BJ (cell line): ENCODE measurements at regions of chr19 and their contacts with region 1.

Region 1: DNA sequence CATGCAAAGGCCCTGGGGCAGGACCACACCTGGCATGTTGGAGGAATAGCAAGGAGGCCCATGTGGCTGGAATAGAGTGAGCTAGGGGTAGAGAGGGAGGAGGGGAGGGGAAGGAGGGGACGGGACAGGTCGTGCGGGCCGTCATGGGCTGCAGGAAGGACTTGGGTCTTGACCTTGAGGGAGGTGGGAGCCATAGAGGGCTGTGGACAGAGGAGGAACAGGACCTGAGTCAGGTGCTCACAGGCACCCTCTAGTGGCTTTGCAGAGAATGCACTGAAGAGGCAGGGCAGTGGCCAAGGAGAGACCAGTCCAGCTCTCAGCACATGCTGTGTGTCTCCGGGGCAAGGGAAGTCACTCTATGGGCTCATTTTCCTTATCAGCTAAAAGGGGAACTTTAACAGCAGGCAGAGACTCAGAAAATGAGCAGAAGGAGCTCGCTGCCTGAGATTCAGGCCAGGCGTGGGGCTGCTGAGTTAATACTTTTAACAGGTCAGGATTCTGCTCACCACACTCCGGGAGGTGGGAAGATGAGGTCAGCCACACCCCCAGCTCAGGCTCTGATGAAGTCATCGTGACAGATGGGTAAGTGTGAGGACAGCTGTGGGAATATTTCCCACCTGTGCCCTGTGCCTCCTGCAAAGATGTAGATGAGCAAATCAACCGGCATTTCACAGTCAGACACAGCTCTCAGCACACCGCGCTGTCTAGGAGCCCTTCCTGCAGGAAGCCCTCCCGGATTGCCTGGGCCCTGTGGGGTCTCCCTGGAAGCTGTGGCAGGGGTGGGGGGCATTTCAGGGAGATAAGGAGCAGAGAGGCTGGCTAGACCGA is 6.0 kb upstream of the TNFAIP8L1 start:
- DNase-seq: no peak
- H3K4me3 ChIP-seq: no peak overlapping the region
- H3K27me3 ChIP-seq: no peaks in the 10 kb centered on the region
- CTCF ChIP-seq: peak; percentile 90

Region 2: DNA sequence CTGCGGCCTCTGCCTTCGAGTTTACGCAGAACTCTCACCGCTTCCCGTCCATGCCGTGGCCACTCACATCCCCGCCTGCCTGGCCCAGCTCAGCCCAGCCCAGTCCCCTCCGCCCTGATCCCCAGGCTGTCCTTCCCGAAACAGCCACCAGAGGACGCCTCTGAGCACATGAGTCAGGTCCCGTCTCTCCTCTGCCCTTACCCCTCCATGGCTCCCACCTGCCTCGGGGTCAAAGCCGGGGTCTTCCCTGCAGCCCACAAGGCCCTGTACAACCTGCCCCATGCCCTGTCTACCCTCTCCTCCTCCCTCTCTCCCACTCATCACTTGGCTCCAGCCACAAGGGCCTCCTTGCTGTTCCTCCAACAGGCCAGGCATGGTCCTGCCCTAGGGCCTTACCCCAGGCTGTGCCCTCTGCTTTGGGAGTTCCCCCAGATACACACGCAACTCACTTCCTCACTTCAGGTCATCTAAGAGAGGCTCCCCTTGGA is 65.7 kb before region 1 on chr19:
- CTCF ChIA-PET with region 1: interaction called, 119 read pairs
- POLR2A ChIA-PET with region 1: no interaction called
- DNase-seq: no peak
- H3K4me3 ChIP-seq: no peak overlapping the region
- H3K27me3 ChIP-seq: no peaks in the 10 kb centered on the region
- CTCF ChIP-seq: peak; percentile 91

Region 3: DNA sequence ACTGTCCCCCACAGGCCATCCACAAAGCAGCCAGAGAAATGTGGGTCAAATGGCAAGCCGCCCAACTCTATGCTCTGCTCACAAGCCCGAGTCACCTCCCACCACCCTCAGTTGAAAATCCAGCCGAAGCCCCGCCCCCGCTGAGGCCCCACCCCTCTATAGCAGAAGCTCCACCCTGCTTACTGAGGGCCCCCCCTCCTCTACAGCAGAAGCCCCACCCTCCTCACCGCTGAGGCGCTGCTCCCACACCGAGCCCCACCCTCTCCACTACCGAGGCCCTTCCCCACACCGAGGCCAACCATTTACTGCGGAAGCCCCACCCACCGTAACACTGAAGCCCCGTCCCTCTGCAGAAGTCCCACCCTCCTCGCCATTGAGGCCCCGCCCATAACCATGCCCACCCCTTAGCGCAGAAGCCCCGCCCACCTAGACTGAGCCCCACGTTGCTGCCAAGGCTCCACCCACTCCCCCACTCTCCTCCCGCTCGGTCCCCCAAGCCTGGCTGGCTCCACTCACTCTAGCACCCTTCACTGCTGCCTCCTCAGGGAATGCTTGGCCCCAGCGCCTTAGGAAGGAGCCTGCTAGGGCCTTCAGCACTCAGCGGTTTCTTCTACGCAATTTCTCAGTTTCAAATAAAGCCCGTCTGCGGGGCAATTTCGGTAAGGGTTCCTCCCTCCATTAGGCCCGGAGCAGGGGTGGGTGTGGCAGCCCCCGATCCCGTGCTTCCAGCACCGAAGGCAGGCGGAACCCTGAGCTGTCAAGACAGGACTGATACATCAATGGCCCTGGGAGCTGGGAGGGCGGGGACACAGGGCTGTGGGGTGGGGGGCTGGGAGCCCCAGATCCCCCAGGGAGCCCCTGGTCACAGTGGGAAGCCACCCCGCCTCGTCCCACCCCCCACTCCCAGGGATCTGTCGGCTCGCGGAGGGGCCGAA is 45.8 kb after region 1 on chr19:
- CTCF ChIA-PET with region 1: no interaction called
- POLR2A ChIA-PET with region 1: no interaction called
- DNase-seq: no peak
- H3K4me3 ChIP-seq: no peak overlapping the region
- H3K27me3 ChIP-seq: no peaks in the 10 kb centered on the region
- CTCF ChIP-seq: no peak

Region 4: GRCh38 chr19:4754248-4754647 is 120.9 kb after region 1 on chr19:
- CTCF ChIA-PET with region 1: no interaction called
- POLR2A ChIA-PET with region 1: no interaction called
- DNase-seq: no peak
- H3K4me3 ChIP-seq: no peak overlapping the region
- H3K27me3 ChIP-seq: peaks cover 3% of the 10 kb centered on the region; the same call in 1 of the 2 replicates
- CTCF ChIP-seq: no peak